Cardiac septum (tissue), 1 donor: ENCODE measurements at regions of chr3 and their contacts with region 1.

Region 1: GRCh38 chr3:183697610-183698317 is at the start of gene YEATS2:
- DNase-seq: peak; percentile 78
- total RNA-seq, gene YEATS2: 15.5 TPM

Region 2: DNA sequence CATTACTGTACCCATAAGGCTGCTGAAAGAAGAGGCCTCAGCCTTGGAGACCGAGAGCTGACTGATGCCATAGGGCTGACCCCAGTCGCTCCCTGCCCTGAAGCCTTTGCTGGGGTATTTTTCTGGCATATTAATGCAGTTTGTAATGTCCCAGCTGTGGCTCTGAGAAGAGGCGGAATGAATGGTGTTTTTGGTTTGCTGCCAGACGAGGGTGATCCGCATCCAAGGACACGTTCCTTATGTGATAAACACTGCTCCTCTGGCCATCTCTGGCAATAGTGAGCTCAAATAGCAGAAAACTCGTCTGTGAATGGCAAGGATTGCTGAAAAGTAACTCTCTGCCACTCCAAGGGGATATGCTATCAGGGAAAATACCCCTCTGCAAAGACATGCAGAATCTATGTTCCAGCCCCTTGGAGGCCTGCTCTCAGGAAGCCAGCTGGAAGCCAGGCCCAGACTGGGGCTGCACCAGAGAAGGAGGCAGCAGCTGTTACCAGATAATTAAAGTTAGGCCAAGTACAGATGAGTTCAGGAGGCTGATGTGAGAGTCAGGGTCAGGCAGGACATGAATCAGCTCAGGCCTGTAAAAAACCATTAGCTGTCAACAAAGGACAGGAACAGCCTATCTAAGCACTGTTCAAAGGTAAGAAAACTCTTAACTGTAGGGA is 113.4 kb before region 1 on chr3:
- intact Hi-C with region 1: loop called (anchors 5 kb)
- DNase-seq: no peak

Region 3: DNA sequence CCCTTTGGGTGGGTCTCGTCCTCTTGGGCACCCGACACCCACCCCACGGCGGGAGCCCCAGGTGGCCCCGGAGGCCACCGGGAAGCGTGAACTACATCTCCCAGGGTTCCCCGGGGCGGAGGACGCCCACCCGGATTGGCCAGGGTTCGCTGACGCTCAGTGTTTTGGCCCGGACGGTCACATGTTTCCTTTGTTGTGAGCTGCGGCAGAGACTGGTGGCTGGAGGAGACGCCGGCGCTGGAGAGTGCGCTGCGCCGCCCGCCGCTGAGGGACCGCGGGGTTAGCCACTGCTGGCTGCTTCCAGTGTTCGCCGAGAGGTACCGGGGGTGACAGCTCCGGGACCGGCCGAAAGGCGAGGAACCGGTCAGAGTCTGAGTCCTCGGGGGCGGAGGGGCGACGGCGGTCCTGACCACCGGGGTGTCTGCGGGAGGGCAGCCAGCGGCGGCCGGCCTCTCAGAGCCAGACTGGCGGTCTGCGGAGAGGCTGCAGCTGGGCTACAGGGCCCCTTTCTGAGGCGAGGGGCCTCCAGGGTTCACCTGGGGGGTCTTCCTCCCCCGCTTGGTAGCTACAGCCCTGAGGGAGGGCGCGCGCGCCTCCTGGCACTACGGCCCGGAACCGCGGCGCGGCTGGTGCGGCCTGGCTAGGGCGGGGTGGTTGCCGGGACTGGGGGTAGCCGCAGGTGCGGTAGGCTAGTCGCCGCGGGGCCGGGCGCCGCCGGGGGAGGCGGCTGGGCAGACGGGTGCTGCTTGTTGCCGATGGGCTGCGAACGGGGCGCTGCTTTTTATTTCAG is 62.1 kb before region 1 on chr3 and contains the start of gene KLHL24:
- intact Hi-C with region 1: loop called (anchors 2 kb)
- DNase-seq: peak; percentile 98
- total RNA-seq, gene KLHL24: 134 TPM

Region 4: GRCh38 chr3:183664913-183665381 is 32.8 kb before region 1 on chr3:
- intact Hi-C with region 1: loop called (anchors 5 kb)
- DNase-seq: no peak